Posterior cingulate gyrus (tissue), 11 donors: ENCODE measurements at regions of chr4 and their contacts with region 1.

Region 1: DNA sequence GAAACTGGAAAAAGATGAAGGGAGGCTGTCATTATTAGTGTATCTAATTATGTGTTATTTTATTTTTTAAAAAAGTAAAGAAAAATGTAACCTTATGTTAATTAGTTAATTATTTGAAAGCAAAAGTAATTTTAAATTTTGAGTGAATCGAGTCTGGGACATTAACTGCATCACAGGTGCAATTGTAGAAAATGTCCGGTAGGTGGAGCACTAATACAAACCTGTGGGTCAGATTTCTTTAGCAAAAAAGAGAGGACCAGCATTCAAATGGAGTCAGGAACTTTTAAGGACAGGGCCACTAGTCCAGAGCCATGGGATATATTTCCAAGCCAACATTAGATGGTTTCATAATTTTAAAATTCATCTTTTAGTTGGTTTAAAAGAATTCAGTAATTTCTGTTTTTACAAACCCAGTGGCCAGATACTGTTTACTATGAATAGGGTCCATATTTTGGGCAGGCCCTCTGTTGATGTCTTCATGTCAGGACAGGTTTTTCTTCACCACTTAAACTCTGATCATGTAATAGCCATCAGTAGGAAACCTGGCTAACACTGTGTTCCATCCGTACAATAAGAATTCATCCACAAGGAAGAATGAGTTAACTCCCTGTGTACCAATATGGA is 27.2 kb downstream of the BST1 start:
- DNase-seq: no peak

Region 2: DNA sequence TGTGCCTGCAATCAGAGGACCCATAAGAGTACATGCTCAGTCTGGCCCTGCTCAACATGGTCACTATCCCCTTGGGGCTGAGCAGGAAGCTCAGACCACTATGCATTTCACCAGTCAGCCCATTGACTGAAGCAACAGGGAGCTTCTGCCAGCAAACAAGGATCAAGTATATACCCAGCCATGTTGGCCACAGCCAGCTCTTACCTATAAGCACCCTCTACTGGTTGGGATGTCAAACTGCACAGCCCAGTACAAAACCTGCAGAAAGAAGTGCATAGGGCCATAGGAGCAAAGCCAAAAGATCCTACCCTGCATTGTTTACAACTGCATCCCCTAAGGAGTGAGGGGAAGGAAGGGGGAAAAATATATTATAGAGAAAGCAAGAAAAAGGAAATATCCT is 942.1 kb before region 1 on chr4:
- intact Hi-C with region 1: no loop called
- DNase-seq: no peak

Region 3: DNA sequence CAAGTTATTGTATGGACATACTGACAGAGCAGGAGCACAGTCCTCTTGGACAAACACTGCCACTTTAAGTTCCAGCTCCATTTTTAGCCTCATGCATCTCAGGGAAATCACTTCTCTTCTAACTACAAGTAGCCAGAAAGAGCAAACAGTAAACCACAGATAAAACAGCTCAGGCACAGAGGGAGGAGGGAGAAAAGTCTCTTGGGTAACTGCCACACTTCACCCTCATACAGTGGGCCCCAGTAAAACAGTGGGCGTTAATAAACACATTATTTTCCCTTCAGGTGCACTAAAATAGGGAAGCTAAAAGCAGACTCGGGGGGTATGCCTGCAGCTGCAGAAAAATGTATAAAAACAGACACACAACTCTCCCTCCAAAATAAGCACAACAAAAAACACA is 69.7 kb after region 1 on chr4:
- intact Hi-C with region 1: loop called (anchors 5 kb)
- DNase-seq: no peak

Region 4: GRCh38 chr4:16717266-16717970 is 987.4 kb after region 1 on chr4:
- intact Hi-C with region 1: no loop called
- DNase-seq: no peak